Posterior cingulate gyrus (tissue), 11 donors: ENCODE measurements at regions of chr9 and their contacts with region 1.

Region 1: GRCh38 chr9:109520478-109521132 is 22.5 kb upstream of the PTPN3 start:
- DNase-seq: peak in 7 of 10 donors; percentile 33 to 89 (median 62)

Region 2: DNA sequence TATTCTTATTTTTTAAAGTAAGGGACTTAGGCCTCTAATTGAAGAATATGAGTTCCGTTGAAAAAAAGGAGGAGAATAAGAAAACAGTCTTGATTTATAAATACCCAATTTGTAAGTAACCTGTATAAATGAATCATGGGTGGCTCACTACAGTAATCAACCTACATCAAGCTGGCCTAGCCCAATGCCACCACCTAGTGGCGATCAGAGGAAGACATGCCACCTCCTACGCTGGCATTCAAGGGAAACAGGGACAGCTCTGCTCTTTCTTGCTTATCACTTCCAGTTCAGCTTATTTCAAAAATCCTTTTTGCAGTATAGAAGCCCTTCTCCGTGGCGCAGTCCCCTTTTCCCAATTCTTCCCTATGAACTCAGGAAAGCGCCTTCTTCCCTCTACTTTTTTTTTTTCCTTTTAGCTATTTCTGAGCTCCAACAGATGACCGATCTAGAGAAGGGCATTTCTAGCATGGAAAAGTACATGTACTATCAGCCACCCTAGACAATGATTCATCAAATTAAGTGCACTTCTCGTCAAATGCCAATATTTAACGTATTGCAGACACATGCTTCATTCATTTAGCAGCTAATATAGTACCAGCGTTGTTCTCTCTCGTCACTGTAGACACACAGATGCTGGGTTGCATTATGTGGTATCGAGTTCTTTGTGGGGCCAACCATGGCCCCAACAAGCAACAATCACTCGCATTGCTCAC is 50.8 kb before region 1 on chr9:
- intact Hi-C with region 1: loop called (anchors 5 kb)
- DNase-seq: peak; percentile 67 to 96 (median 82)

Region 3: GRCh38 chr9:109733690-109734089 is 213.1 kb after region 1 on chr9:
- intact Hi-C with region 1: no loop called
- DNase-seq: no peak